Heart left ventricle (tissue), 16 donors: ENCODE measurements at regions of chr2 and their contacts with region 1.

Region 1: GRCh38 chr2:71385012-71385411 is 53.4 kb downstream of the ZNF638 start:
- DNase-seq: no peak
- ATAC-seq: peak; percentile 54 to 81 (median 60)
- H3K4me3 ChIP-seq: no peak overlapping the region
- H3K27ac ChIP-seq: peak overlapping the region in 1 of 12 donors; percentile 4
- H3K4me1 ChIP-seq: peaks cover 0 to 17% (median 0%) of the 10 kb centered on the region in 12 donors
- H3K27me3 ChIP-seq: no peaks in the 10 kb centered on the region
- CTCF ChIP-seq: no peak
- POLR2A ChIP-seq: no peak

Region 2: GRCh38 chr2:70861777-70862625 is 523.0 kb before region 1 on chr2:
- intact Hi-C with region 1: no loop called
- DNase-seq: peak; percentile 70 to 83 (median 76)
- ATAC-seq: peak in 3 of 4 donors; percentile 86 to 89 (median 88)
- H3K4me3 ChIP-seq: no peak overlapping the region
- H3K27ac ChIP-seq: no peak overlapping the region
- H3K4me1 ChIP-seq: peaks cover 0 to 5% (median 0%) of the 10 kb centered on the region in 12 donors
- H3K27me3 ChIP-seq: peaks cover 3 to 52% (median 19%) of the 10 kb centered on the region in 9 donors
- CTCF ChIP-seq: peak; percentile 89 to 99 (median 95)
- POLR2A ChIP-seq: no peak

Region 3: GRCh38 chr2:71306762-71307161 is 78.2 kb before region 1 on chr2:
- intact Hi-C with region 1: loop called in 1 of 10 experiments (anchors 10 kb)
- DNase-seq: peak in 1 of 5 donors; percentile 34
- ATAC-seq: peak in 3 of 4 donors; percentile 81 to 91 (median 85)
- H3K4me3 ChIP-seq: no peak overlapping the region
- H3K27ac ChIP-seq: peak overlapping the region in 5 of 12 donors; percentile 18 to 44 (median 32)
- H3K4me1 ChIP-seq: peaks cover 0 to 18% (median 4%) of the 10 kb centered on the region in 12 donors
- H3K27me3 ChIP-seq: no peaks in the 10 kb centered on the region
- CTCF ChIP-seq: no peak
- POLR2A ChIP-seq: no peak

Region 4: DNA sequence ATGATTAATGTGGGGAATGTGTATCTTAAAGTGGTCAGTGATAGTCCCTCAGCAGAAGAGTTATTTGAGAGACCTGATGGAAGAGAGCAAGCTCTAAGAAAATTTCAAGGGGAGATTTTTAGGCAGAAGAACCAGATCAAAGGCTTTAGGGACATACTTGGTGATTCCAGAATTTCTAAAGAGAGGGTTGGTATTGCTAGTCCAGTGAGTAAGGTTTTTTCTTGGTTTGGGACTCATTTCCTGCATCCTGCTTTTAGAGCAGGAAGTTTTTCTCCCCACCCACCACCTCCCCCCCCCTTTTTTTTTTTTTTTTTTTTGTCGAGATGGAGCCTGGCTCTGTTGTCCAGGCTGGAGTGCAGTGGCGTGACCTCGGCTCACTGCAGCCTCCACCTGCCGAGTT is 25.7 kb after region 1 on chr2:
- intact Hi-C with region 1: no loop called
- DNase-seq: no peak
- ATAC-seq: no peak
- H3K4me3 ChIP-seq: no peak overlapping the region
- H3K27ac ChIP-seq: peak overlapping the region in 2 of 12 donors; percentile 35 to 52
- H3K4me1 ChIP-seq: no peaks in the 10 kb centered on the region
- H3K27me3 ChIP-seq: no peaks in the 10 kb centered on the region
- CTCF ChIP-seq: no peak
- POLR2A ChIP-seq: no peak

Region 5: GRCh38 chr2:71530641-71531332 is 145.8 kb after region 1 on chr2:
- intact Hi-C with region 1: no loop called
- DNase-seq: no peak
- ATAC-seq: peak in 3 of 4 donors; percentile 38 to 61 (median 59)
- H3K4me3 ChIP-seq: no peak overlapping the region
- H3K27ac ChIP-seq: no peak overlapping the region
- H3K4me1 ChIP-seq: no peaks in the 10 kb centered on the region
- H3K27me3 ChIP-seq: no peaks in the 10 kb centered on the region
- CTCF ChIP-seq: peak; percentile 47 to 73 (median 62)
- POLR2A ChIP-seq: no peak